CD4-positive, alpha-beta memory T cell (primary cell): ENCODE measurements at regions of chr2 and their contacts with region 1.

Region 1: DNA sequence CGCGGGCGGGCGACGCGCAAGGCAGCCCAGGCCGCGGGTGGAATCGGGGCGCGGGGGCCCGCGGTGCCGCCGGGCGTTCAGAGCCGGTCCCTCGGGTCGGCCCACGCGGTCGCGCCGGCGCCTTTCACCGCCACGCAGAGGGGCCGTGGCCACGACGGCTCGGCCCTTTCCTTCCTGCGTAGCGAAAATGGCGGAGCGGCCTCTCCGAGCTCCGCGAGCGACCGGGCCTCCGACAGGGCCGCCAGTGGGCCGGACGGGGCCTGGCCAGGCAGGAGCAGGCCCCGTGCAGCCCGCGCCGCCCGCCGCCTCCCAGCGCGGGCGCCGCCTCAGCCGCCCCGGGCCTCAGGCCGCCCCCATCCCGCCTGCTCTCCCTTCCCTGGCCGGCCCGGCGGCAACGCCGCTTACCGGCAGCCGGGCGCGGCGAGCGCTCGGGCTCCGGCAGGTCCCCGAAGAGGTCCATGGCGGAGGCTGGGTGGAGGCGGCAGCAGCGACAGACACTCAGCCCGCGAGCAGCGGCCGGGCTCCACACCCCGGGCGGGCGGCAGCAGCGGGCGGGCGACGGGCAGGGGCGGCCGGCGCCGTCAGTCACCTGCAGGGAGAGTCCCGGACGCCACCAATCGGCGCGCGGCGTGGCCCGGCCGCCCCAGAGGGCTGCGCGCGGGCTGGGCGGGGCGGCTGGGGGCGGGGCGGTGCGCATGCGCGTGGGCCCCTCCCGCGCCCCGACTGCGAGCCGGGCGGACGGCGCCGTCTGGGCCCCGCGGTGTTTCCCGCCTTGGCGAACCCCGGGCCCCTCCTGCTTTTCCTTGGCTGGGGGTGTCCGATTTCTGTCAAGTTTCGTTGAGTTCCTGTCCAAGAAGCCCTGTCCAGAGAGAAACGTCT is at the start of gene ILKAP:
- DNase-seq: peak; percentile 88 to 93 (median 91)
- H3K4me3 ChIP-seq: peak within 1 kb of the TSS; percentile 30 to 72
- H3K4me3 Mint-ChIP-seq: peak within 1 kb of the TSS; percentile 87 to 94 (median 91)
- H3K27ac ChIP-seq: peak within 1 kb of the TSS; percentile 79
- H3K27ac Mint-ChIP-seq: peak within 1 kb of the TSS; percentile 89 to 97 (median 94)
- H3K4me1 ChIP-seq: peaks cover 48% of the 10 kb centered on the region
- H3K4me1 Mint-ChIP-seq: peaks cover 28 to 46% (median 36%) of the 10 kb centered on the region in 4 donors
- H3K27me3 ChIP-seq: no peaks in the 10 kb centered on the region
- H3K27me3 Mint-ChIP-seq: no peaks in the 10 kb centered on the region
- total RNA-seq, gene ILKAP: 78.2 to 87.8 TPM

Region 2: DNA sequence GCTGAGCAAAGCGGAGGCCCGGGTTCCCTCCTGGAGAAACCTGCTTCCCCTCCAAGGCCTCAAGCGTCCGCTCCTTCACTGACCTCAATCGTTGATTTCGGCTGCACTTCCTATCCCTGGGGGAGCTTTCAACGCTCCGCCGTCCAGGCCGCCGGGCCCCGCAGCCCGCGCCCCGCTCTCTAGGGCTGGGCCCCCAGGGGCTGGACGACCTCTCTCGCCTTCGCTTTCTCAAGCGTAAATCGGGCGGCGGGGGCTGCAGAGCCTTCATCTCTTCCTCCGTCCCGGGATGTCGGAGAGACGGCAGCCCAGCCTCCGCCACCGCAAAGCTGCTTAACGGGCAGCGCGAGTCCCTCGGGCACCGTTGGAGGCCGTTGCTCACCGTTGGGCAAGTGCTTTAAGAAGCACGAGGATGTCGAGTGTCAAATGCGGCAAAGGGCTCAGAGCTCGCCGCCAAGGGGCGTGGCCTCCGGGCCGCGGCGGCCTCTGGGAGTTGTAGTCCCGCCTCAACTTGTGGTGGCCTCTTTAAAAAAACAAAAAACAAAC is 28.0 kb after region 1 on chr2:
- CTCF ChIA-PET with region 1: no interaction called
- POLR2A ChIA-PET with region 1: interaction called, 17 read pairs
- intact Hi-C with region 1: loop called (anchors 1 kb)
- DNase-seq: peak; percentile 44 to 83 (median 78)
- H3K4me3 ChIP-seq: peak overlapping the region; percentile 20 to 55
- H3K4me3 Mint-ChIP-seq: peak overlapping the region; percentile 75 to 92 (median 80)
- H3K27ac ChIP-seq: no peak overlapping the region
- H3K27ac Mint-ChIP-seq: peak overlapping the region in 6 of 7 donors; percentile 7 to 72 (median 50)
- H3K4me1 ChIP-seq: peaks cover 16% of the 10 kb centered on the region
- H3K4me1 Mint-ChIP-seq: peaks cover 13 to 47% (median 21%) of the 10 kb centered on the region in 4 donors
- H3K27me3 ChIP-seq: peaks cover 3% of the 10 kb centered on the region
- H3K27me3 Mint-ChIP-seq: peaks cover 16 to 23% of the 10 kb centered on the region in 2 donors

Region 3: GRCh38 chr2:238239872-238240751 is 36.8 kb after region 1 on chr2 and contains the start of gene HES6:
- CTCF ChIA-PET with region 1: no interaction called
- POLR2A ChIA-PET with region 1: interaction called, 15 read pairs
- intact Hi-C with region 1: loop called (anchors 2 kb)
- DNase-seq: peak; percentile 68 to 80 (median 74)
- H3K4me3 ChIP-seq: peak within 1 kb of the TSS in 1 of 2 donors; percentile 52
- H3K4me3 Mint-ChIP-seq: peak within 1 kb of the TSS; percentile 87 to 98 (median 91)
- H3K27ac ChIP-seq: no peak within 1 kb of the TSS
- H3K27ac Mint-ChIP-seq: peak within 1 kb of the TSS in 6 of 7 donors; percentile 25 to 91 (median 90)
- H3K4me1 ChIP-seq: peaks cover 12% of the 10 kb centered on the region
- H3K4me1 Mint-ChIP-seq: peaks cover 1 to 32% (median 4%) of the 10 kb centered on the region in 4 donors
- H3K27me3 ChIP-seq: peaks cover 8% of the 10 kb centered on the region
- H3K27me3 Mint-ChIP-seq: peaks cover 14 to 15% of the 10 kb centered on the region in 2 donors
- total RNA-seq, gene HES6: 0.67 to 2.1 TPM

Region 4: DNA sequence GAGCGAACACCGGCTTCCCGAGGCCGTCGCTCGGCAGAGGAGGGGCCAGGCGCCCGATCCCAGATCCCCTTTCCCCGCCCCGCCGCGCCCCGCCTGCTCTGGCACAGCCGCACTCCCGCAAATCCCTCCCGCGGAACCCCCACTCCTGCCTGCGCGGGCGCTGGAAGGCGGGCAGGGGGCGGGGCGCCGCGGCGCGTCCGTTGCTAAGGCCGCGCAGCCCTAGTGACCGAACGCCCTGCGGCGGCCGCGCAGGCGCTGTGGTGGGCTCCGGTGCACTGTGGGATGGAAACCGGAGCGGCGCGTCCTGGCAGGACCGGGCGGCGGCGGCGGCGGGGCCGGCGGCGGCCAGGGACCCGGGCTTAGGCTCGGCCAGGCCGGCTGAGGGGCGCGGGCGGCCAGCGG is 116.9 kb after region 1 on chr2 and contains the start of gene TRAF3IP1:
- CTCF ChIA-PET with region 1: no interaction called
- POLR2A ChIA-PET with region 1: no interaction called
- intact Hi-C with region 1: loop called (anchors 1 kb)
- DNase-seq: peak; percentile 84 to 87 (median 86)
- H3K4me3 ChIP-seq: peak within 1 kb of the TSS; percentile 29 to 60
- H3K4me3 Mint-ChIP-seq: peak within 1 kb of the TSS; percentile 79 to 86 (median 82)
- H3K27ac ChIP-seq: no peak within 1 kb of the TSS
- H3K27ac Mint-ChIP-seq: peak within 1 kb of the TSS; percentile 43 to 88 (median 64)
- H3K4me1 ChIP-seq: peaks cover 18% of the 10 kb centered on the region
- H3K4me1 Mint-ChIP-seq: peaks cover 12 to 25% (median 19%) of the 10 kb centered on the region in 4 donors
- H3K27me3 ChIP-seq: no peaks in the 10 kb centered on the region
- H3K27me3 Mint-ChIP-seq: peaks cover 0 to 3% of the 10 kb centered on the region in 2 donors
- total RNA-seq, gene TRAF3IP1: 6.8 to 11.0 TPM